H1 (cell line): ENCODE measurements at regions of chr2 and their contacts with region 1.

Region 1: GRCh38 chr2:232463701-232464543 is 8.0 kb downstream of the ALPI start:
- DNase-seq: no peak
- H3K4me3 ChIP-seq: no peak overlapping the region
- H3K27ac ChIP-seq: no peak overlapping the region
- H3K4me1 ChIP-seq: peaks cover 0 to 2% (median 0%) of the 10 kb centered on the region in 4 experiments; a peak in 1 of 7 replicates
- H3K27me3 ChIP-seq: no peaks in the 10 kb centered on the region
- CTCF ChIP-seq: no peak
- EP300 ChIP-seq: no peak
- POLR2A ChIP-seq: no peak
- RAD21 ChIP-seq: no peak

Region 2: DNA sequence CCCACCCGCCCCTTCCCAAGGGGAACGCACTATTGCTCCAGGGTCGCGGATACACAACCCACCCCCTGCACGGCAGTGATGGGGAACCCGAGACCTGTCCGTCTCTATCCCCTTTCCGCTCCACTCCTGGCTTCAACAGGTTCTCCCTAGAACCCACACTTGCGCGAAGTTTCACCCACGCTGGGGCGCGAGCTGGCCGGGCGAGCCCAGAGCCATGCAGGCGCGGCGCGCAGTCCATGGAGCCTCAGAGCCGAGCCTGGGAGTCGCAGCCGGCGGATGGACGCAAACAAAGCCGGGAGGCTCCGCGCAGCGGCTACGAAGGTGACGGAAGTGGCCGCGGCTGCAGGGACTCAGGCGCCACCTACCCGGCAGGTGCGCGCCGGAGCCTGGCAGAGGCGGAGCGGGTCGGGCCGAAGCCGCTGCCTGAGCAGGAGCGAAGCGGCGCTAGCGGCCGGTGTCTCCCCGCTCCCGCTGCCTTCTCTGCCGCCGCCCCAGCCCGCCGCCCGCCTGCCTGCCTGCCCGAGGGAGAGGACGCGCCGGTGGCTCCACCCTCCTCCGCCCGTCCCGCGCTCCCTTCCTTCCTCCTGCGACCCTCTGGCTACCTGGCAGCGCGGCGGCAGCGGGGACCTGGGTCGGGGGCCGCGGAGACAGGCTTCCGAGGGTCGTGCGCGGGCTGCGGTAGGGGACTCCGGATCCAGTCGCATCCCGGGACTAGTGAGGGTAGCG is 43.3 kb before region 1 on chr2:
- CTCF ChIA-PET with region 1: no interaction called
- POLR2A ChIA-PET with region 1: no interaction called
- DNase-seq: peak in 1 of 2 experiments; percentile 76
- H3K4me3 ChIP-seq: peak overlapping the region; percentile 69 to 95 (median 76)
- H3K27ac ChIP-seq: peak overlapping the region; percentile 27
- H3K4me1 ChIP-seq: peaks cover 8 to 43% (median 31%) of the 10 kb centered on the region in 4 experiments
- H3K27me3 ChIP-seq: peaks cover 12 to 40% (median 36%) of the 10 kb centered on the region in 4 experiments
- CTCF ChIP-seq: no peak
- EP300 ChIP-seq: no peak
- POLR2A ChIP-seq: no peak
- RAD21 ChIP-seq: no peak

Region 3: DNA sequence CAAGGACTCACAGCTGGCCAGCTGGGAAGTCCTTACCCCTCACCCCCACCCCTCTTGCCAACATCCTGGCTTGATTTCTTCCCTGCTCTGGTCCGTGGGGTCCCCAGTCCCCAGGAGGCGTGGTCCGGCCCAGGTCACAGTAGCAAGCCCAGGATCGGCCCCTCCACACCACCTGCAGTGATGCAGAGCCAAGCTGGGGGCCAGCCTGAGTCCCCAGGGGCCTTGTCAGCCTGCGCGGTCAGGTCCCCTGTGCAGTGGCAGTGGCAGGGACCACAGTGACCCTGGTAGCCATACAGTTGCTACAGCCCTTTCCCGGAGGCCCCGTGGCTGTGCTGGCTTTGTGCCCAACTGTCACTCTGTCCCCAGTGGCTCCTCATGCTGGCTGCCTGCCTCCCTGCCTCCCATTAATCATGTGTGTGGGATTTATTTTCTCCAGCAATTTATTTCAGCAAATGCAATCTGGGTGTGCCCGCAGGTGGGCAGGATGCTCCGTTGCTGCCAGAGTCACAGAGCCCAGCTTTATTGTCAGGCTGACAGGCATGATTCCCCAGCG is 47.5 kb after region 1 on chr2:
- CTCF ChIA-PET with region 1: interaction called, 13 read pairs
- POLR2A ChIA-PET with region 1: no interaction called
- DNase-seq: no peak
- H3K4me3 ChIP-seq: no peak overlapping the region
- H3K27ac ChIP-seq: no peak overlapping the region
- H3K4me1 ChIP-seq: peaks cover 0 to 10% (median 3%) of the 10 kb centered on the region in 4 experiments; a peak in 2 of 7 replicates
- H3K27me3 ChIP-seq: peaks cover 0 to 10% (median 4%) of the 10 kb centered on the region in 4 experiments; a peak in 3 of 7 replicates
- CTCF ChIP-seq: no peak
- EP300 ChIP-seq: no peak
- POLR2A ChIP-seq: no peak
- RAD21 ChIP-seq: no peak